ENCODE measurements at regions of chr7 and their contacts with region 1.

Region 1: DNA sequence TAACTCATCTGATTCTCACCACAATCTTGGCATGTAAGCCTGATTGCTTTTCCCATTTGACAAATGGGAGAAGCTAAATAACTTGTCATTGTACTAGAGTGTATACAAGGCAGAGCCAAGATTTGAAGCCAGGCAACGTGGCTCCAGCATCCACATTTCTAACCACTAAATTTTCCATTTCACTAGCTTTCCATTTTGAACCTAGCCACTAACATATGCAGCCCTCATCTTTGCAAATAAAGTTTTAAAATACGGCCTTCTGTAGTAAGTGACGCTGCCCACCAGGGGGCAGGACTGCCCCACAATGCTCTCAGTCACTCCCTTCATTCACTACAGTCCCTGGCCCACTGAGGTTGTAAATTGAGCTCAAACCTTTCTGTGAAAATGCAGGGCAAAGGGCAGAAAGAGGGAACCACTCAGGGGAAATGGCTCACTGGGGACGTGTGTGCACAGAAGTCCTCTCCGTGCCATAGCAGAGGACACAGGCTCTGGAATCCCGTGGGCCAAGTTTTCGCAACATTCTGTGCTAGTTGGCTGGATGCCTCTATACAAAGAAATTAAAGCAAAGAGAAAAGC is 315.7 kb downstream of the TNS3 start:
- H3K4me3 ChIP-seq: no peak overlapping the region
- H3K27ac ChIP-seq: no peak overlapping the region
- H3K4me1 ChIP-seq: no peaks in the 10 kb centered on the region
- CTCF ChIP-seq: peak; percentile 38; the same call in 1 of the 2 replicates

Region 2: DNA sequence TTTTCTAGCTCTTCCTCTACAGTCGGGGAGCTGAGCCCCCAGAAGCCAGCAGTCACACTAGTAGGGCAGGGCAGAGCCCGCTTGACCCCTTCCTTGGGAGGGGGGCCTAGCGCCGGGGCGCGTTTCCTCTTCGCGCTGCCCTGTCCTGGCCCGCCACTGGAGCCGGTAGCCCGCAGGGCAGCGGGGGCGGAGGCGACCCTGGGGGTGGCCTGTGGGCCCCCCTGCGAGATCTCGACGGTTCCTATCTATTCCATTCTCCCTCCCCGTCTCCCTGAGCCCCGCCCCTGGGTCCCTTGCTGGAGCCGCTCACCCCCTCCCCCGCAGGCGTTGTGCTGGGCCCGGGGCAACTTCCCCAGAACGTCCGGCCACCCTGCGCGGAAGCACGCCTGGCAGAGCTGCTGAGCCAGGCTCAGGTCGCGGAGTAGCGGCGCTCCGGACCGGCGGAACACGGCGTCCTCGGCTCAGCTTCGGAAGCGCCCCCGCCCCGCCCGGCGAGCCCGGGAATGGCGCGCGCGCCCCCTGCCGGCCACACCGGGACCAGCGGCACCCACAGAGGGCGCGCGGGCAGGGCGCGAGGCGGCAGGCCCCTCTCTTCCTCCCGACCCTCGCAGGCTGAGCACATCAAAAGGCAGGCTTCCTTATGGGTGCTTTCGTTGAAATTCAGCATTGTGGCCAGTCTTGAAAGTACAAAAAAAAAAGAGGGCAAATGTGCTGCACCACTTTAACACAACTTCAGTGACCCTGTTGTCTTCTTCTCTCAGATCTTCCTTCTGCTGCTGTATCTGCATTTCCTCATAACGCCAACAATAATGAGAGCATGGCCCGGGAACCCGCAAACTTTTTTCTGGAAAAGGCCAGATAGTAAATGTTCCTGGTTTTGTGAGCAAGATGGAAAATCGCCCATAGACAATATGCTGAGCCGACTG is 11.9 kb before region 1 on chr7:
- CTCF ChIA-PET with region 1: interaction called, 23 read pairs
- POLR2A ChIA-PET with region 1: no interaction called
- H3K4me3 ChIP-seq: peak overlapping the region; percentile 67
- H3K27ac ChIP-seq: peak overlapping the region; percentile 42; the same call in 1 of the 2 replicates
- H3K4me1 ChIP-seq: no peaks in the 10 kb centered on the region
- CTCF ChIP-seq: peak; percentile 39; the same call in 1 of the 2 replicates

Region 3: DNA sequence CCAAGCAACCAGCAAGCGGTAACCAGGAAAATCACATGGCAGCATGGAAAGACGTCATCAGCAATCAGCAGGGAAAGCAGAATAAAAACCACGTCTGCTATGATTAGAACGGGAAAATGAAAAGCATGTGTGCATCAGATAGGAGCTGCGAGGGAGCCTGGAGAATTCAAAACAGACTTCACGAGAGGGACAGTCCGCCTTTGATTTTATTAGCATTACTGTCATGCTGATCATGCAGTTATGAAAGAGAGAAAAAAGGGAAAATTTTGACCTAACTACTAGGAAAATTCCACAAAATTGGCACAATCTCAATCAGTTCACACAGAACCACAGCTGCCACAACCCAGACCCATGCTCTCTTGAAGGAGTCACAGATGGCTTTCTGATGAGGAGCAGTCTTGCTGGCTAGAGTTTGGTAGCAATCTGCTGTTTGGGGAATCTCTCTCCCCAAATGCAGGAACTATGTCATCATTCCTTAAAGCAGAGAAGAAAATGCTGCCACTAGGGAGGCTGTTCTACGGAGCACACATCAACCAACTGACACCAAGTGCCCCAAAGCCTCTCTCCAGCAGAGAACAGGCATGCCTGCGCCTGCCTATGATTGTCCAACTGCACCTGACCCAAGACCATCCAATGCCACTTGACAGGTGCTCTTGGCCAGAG is 19.8 kb after region 1 on chr7:
- CTCF ChIA-PET with region 1: interaction called, 11 read pairs
- POLR2A ChIA-PET with region 1: no interaction called
- H3K4me3 ChIP-seq: no peak overlapping the region
- H3K27ac ChIP-seq: no peak overlapping the region
- H3K4me1 ChIP-seq: no peaks in the 10 kb centered on the region
- CTCF ChIP-seq: no peak

Region 4: DNA sequence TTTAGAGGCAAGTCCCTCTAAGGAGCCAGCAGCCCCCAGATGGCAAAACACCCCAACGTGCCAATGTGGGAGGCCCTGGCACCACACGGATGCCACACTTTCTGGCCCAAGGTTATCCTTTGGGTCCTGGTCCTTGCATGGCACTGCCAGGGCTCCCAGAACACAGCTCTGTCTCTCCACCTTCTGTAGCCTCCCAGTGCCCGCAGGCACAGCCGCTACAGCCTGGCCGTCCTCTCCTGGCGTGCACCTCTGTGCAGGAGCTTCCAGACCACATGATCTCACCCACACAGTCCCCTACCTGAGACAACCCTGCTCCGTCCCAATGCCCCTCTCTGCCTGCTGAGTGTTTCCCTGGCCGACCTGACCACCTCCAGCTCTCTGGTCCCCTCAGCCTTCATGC is 100.7 kb after region 1 on chr7:
- CTCF ChIA-PET with region 1: no interaction called
- POLR2A ChIA-PET with region 1: no interaction called
- H3K4me3 ChIP-seq: no peak overlapping the region
- H3K27ac ChIP-seq: no peak overlapping the region
- H3K4me1 ChIP-seq: peaks cover 6% of the 10 kb centered on the region
- CTCF ChIP-seq: no peak

Region 5: DNA sequence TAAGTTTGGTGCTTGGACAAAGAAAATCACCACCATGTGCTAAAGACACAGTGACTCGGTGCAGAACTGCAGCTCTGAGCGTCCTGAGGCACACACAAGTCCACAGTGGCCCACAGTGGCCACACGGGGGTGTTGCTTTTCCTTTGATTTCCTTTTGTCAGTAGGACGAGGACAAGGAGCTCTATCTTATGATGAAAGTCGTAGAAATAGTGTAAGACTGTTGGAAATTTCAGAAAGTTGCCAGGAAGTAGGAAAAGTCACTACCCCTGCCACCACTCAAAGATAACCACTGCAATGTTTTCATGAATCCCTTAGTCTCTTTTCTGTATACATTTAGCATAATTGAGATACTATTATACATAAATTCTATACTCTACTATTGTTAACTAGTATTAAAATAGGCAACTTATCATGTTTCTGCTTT is 169.7 kb after region 1 on chr7:
- CTCF ChIA-PET with region 1: interaction called, 73 read pairs
- POLR2A ChIA-PET with region 1: interaction called, 6 read pairs
- H3K4me3 ChIP-seq: no peak overlapping the region
- H3K27ac ChIP-seq: no peak overlapping the region
- H3K4me1 ChIP-seq: no peaks in the 10 kb centered on the region
- CTCF ChIP-seq: peak; percentile 23; the same call in 1 of the 2 replicates

Region 6: GRCh38 chr7:47818796-47819606 is 552.8 kb after region 1 on chr7:
- CTCF ChIA-PET with region 1: interaction called, 38 read pairs
- POLR2A ChIA-PET with region 1: no interaction called
- H3K4me3 ChIP-seq: no peak overlapping the region
- H3K27ac ChIP-seq: no peak overlapping the region
- H3K4me1 ChIP-seq: no peaks in the 10 kb centered on the region
- CTCF ChIP-seq: peak; percentile 61; the same call in 1 of the 2 replicates

Measured in HEK293 (cell line).